Activated CD4-positive, alpha-beta T cell treated with anti-CD3 and anti-CD28 coated beads, Interleukin-2, amount 10 ng/mL, durations not matched to agents 24 days and 14 days (primary cell): ENCODE measurements at regions of chr19 and their contacts with region 1.

Region 1: GRCh38 chr19:46346821-46347571 is at the start of gene PPP5C:
- DNase-seq: peak; percentile 96
- H3K4me3 Mint-ChIP-seq: peak within 1 kb of the TSS; percentile 93
- H3K27ac Mint-ChIP-seq: peak within 1 kb of the TSS; percentile 93
- H3K4me1 Mint-ChIP-seq: peaks cover 50% of the 10 kb centered on the region
- H3K27me3 Mint-ChIP-seq: peaks cover 19% of the 10 kb centered on the region
- total RNA-seq, gene PPP5C: 160 and 169 TPM in 2 replicates

Region 2: DNA sequence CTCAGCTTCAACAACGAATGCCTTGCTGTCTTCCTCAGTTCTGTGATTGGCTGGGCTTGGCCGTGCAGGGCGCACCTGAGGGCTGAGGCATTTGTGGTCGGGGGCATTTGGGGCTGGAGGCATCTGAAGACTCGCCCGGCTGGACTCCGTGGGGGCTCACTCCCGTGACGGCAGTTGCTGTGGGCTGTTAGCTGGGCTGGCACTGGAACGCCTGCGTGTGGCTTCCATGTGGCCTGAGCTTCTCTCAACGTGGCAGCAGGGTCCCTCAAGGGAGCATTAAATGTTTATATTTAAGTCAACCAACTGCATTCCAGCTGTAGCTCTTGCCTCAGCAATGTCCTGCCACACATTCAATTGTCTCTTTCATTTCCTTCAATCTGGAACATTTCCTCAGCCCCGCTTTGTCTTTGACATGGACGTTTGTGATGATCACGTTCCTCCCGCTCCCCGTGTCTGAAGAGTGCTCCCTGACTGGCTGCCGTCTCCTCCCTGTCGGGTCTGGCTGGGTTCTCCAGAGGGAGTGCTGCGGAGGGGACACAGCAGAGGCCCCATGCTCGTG is 45.3 kb after region 1 on chr19:
- intact Hi-C with region 1: loop called (anchors 1 kb)
- DNase-seq: no peak
- H3K4me3 Mint-ChIP-seq: no peak overlapping the region
- H3K27ac Mint-ChIP-seq: peak overlapping the region; percentile 1
- H3K4me1 Mint-ChIP-seq: peaks cover 2% of the 10 kb centered on the region
- H3K27me3 Mint-ChIP-seq: peaks cover under 1% of the 10 kb centered on the region

Region 3: GRCh38 chr19:46413262-46414031 is 66.5 kb after region 1 on chr19 and contains the start of gene CCDC8:
- intact Hi-C with region 1: no loop called
- DNase-seq: no peak
- H3K4me3 Mint-ChIP-seq: no peak within 1 kb of the TSS
- H3K27ac Mint-ChIP-seq: no peak within 1 kb of the TSS
- H3K4me1 Mint-ChIP-seq: peaks cover 5% of the 10 kb centered on the region
- H3K27me3 Mint-ChIP-seq: peaks cover 71% of the 10 kb centered on the region
- total RNA-seq, gene CCDC8: not detected in 2 replicates

Region 4: DNA sequence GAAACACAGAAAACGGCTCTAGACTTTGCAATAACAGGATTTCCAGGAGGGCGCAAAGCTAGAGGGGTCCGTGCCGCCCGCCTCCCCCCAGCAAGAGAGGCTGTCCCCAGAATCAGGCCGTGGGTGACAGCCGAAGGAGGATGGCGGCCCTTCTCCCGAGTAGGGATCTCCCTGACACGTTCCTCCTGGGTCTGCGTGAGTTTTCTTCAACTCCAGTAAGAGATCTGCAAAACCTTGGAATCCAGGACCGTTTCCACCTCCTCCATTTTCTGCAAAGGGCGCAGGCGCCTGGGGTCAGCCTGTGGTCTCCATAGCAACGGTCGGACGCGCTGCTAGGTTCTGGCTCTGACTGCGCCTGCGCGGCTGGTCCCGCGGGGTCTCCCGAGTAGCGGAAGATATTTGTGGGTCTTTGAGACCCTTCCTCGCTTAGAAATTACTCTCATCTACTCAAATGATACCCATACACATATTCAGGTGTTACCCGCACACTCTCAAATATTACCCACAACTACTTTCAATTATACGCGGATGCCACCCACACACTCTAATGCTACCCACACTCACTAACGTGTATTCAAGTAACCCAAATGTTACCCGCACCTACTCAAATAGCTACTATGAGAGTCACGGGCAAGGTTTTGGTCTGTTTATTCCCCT is 79.6 kb after region 1 on chr19:
- intact Hi-C with region 1: no loop called
- DNase-seq: peak; percentile 68
- H3K4me3 Mint-ChIP-seq: peak overlapping the region; percentile 53
- H3K27ac Mint-ChIP-seq: no peak overlapping the region
- H3K4me1 Mint-ChIP-seq: peaks cover 27% of the 10 kb centered on the region
- H3K27me3 Mint-ChIP-seq: peaks cover 64% of the 10 kb centered on the region

Region 5: GRCh38 chr19:46542428-46543230 is 195.6 kb after region 1 on chr19:
- intact Hi-C with region 1: no loop called
- DNase-seq: peak; percentile 92
- H3K4me3 Mint-ChIP-seq: no peak overlapping the region
- H3K27ac Mint-ChIP-seq: no peak overlapping the region
- H3K4me1 Mint-ChIP-seq: peaks cover 6% of the 10 kb centered on the region
- H3K27me3 Mint-ChIP-seq: peaks cover 9% of the 10 kb centered on the region